Left ventricle myocardium superior (tissue), 1 donor: ENCODE measurements at regions of chr15 and their contacts with region 1.

Region 1: DNA sequence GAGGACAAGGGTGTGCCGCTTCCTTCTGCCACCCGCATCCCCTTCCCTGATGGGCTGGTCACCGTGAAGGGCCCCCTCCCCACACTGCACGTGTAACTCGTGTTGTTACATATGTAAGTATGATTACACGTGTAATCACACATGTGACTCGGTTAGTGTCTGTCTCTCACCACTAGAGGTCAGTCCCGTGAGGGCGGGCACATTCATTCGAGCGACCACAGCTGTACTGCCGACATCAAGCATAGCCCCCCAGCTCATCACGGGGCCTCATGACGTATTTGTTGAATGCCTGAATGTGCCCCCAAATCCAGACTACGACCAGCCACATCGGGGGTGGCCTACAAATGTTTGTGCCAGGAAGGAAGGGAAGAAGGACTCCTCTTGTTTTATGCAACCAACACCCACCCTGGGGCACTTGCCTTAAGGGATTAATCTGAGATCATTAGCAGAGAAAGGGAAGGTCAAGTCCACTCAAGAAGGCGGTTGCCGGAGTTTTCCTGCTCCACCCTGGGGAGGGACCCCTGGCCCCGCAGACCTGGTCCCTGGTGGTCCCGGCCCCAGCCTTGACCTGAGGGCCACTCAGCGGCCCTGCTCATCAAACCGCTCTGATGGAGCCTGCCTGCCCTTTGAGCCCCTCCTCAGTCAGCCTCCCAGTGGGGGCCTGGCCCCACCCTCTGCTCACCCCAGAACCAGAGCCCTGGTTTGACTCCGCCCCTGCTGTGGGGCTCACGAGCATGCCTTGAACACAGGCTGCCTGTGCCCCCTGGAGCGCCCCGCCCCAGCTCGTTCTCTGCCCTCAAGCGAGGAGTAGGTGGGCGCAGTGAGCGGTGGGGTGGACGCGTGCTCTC is 52.8 kb downstream of the RGMA start:
- DNase-seq: no peak
- ATAC-seq: no peak

Region 2: GRCh38 chr15:92355307-92355706 is 680.9 kb before region 1 on chr15:
- intact Hi-C with region 1: no loop called
- DNase-seq: no peak
- ATAC-seq: no peak

Region 3: GRCh38 chr15:92611993-92612745 is 424.0 kb before region 1 on chr15:
- intact Hi-C with region 1: no loop called
- DNase-seq: no peak
- ATAC-seq: peak; percentile 37

Region 4: DNA sequence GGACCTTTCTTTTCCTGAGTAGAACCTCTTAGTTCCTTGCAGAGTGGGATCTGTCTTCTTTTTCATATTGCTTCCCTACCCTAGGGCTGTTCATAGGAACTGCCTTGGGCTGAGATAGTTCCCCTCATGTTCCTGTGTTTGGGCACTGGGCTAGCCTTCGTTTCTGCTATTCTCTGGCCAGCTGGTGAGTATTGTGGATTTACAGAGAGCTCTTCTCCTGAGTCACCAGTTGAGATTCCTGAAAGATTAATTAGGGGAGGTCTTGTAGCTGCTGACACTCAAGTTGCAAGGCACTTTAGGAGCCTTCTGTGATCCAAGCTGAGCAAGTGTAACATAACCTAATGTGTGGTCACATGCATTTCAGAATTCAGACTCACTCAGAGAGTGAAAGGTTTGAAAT is 105.4 kb before region 1 on chr15:
- intact Hi-C with region 1: no loop called
- DNase-seq: no peak
- ATAC-seq: peak; percentile 28

Region 5: GRCh38 chr15:93072411-93073394 is 36.5 kb after region 1 on chr15:
- intact Hi-C with region 1: loop called (anchors 5 kb)
- DNase-seq: peak; percentile 92
- ATAC-seq: peak; percentile 93